Colonic mucosa (tissue), 4 donors: ENCODE measurements at regions of chr20 and their contacts with region 1.

Region 1: GRCh38 chr20:43068482-43068881 is 121.2 kb downstream of the PTPRT start:
- DNase-seq: no peak
- H3K4me3 ChIP-seq: no peak overlapping the region
- H3K27ac ChIP-seq: no peak overlapping the region
- H3K4me1 ChIP-seq: no peaks in the 10 kb centered on the region
- H3K27me3 ChIP-seq: no peaks in the 10 kb centered on the region
- CTCF ChIP-seq: no peak

Region 2: GRCh38 chr20:43003318-43003944 is 65.1 kb before region 1 on chr20:
- intact Hi-C with region 1: loop called (anchors 10 kb)
- DNase-seq: no peak
- H3K4me3 ChIP-seq: no peak overlapping the region
- H3K27ac ChIP-seq: no peak overlapping the region
- H3K4me1 ChIP-seq: no peaks in the 10 kb centered on the region
- H3K27me3 ChIP-seq: no peaks in the 10 kb centered on the region
- CTCF ChIP-seq: no peak

Region 3: DNA sequence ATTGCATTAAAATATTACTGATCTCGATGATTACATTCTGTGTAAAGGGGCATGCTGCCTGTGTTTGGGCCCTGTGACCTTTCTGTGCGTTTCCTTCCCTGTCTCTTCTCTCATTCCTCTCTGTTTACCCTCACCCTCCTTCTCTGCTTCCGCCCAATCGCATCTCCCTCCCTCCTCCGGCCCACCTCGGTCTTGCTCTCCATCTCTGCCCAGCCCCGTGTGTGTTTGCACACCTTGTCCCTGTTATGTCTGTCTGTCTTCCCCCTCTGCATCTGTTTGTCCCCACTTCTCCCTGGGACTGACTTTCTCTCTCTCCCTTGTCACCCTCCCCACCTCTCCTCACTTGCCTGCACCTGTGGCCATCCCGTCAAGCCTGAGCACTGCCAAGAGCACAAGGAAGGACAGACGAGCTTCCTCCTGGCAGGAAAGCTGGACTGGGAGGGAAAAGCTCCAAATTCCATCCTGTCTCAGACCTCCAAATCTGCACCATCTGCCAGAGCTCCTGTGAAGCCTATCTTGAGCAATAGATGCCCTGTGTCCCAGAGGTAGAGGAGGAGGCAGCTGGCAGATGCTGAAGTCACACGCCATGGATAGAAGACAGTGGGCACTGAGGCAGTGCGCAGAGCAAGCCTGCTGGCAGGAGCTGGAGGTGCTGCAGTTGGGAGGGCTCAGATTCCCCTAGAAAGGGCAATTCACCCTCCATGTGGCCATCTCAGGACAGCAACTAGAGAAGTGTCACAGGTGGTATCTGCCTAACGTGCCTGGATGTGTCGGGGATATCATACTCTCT is 51.0 kb before region 1 on chr20:
- intact Hi-C with region 1: no loop called
- DNase-seq: no peak
- H3K4me3 ChIP-seq: no peak overlapping the region
- H3K27ac ChIP-seq: no peak overlapping the region
- H3K4me1 ChIP-seq: no peaks in the 10 kb centered on the region
- H3K27me3 ChIP-seq: no peaks in the 10 kb centered on the region
- CTCF ChIP-seq: no peak